PC-9 (cell line): ENCODE measurements at regions of chr2 and their contacts with region 1.

Region 1: GRCh38 chr2:170576296-170576695 is 138.8 kb upstream of the SP5 start:
- DNase-seq: no peak
- H3K4me3 ChIP-seq: no peak overlapping the region
- H3K27ac ChIP-seq: no peak overlapping the region
- H3K4me1 ChIP-seq: no peaks in the 10 kb centered on the region
- H3K27me3 ChIP-seq: no peaks in the 10 kb centered on the region
- CTCF ChIP-seq: no peak

Region 2: GRCh38 chr2:170409164-170409535 is 167.1 kb before region 1 on chr2:
- CTCF ChIA-PET with region 1: interaction called, 14 read pairs
- POLR2A ChIA-PET with region 1: no interaction called
- intact Hi-C with region 1: no loop called
- DNase-seq: peak in 1 of 2 experiments; percentile 47
- H3K4me3 ChIP-seq: no peak overlapping the region
- H3K27ac ChIP-seq: no peak overlapping the region
- H3K4me1 ChIP-seq: peaks cover 15% of the 10 kb centered on the region
- H3K27me3 ChIP-seq: no peaks in the 10 kb centered on the region
- CTCF ChIP-seq: peak; percentile 94

Region 3: GRCh38 chr2:170554278-170554955 is 21.9 kb before region 1 on chr2:
- CTCF ChIA-PET with region 1: no interaction called
- POLR2A ChIA-PET with region 1: interaction called, 10 read pairs
- intact Hi-C with region 1: no loop called
- DNase-seq: no peak
- H3K4me3 ChIP-seq: no peak overlapping the region
- H3K27ac ChIP-seq: no peak overlapping the region
- H3K4me1 ChIP-seq: no peaks in the 10 kb centered on the region
- H3K27me3 ChIP-seq: no peaks in the 10 kb centered on the region
- CTCF ChIP-seq: no peak